ENCODE measurements at regions of chr20 and their contacts with region 1.

Region 1: DNA sequence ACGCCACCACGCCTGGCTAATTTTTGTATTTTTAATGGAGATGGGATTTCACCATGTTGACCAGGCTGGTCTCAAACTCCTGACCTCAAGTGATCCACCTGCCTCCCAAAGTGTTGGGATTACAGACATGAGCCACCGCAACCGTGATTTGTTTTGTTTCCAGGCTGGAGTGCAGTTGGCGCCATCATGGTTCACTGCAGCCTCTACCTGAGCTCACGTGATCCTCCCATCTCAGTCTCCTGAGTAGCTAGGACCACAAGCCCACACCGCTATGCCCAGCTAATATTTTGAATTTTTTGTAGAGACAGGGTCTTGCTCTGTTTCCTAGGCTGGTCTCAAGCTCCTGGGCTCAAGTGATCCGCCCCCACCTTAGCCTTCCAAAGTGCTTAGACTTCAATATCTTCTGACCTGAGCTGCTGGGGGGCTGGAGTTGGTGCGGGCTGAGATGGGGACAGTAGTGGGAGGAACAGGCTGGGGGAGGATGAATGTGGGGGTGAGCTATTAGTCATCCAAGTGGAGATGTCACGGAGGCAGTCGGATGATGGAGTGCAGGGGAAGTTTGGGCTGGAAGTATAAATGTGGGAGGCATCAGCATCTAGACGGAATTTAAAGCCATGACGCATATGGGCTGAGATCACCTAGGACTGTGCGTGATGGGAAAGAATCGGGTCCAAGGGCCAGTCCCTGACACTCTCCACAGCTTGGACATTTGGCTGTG is 23.1 kb upstream of the ZMYND8 start:
- DNase-seq: peak; percentile 63
- H3K4me3 Mint-ChIP-seq: no peak overlapping the region
- H3K27ac Mint-ChIP-seq: no peak overlapping the region
- H3K4me1 Mint-ChIP-seq: peaks cover 14% of the 10 kb centered on the region
- H3K27me3 Mint-ChIP-seq: no peaks in the 10 kb centered on the region
- CTCF ChIP-seq: no peak

Region 2: GRCh38 chr20:46959081-46959692 is 420.4 kb before region 1 on chr20:
- CTCF ChIA-PET with region 1: no interaction called
- POLR2A ChIA-PET with region 1: no interaction called
- intact Hi-C with region 1: no loop called
- DNase-seq: peak; percentile 89
- H3K4me3 Mint-ChIP-seq: no peak overlapping the region
- H3K27ac Mint-ChIP-seq: no peak overlapping the region
- H3K4me1 Mint-ChIP-seq: peaks cover 37% of the 10 kb centered on the region
- H3K27me3 Mint-ChIP-seq: no peaks in the 10 kb centered on the region
- CTCF ChIP-seq: no peak

Region 3: DNA sequence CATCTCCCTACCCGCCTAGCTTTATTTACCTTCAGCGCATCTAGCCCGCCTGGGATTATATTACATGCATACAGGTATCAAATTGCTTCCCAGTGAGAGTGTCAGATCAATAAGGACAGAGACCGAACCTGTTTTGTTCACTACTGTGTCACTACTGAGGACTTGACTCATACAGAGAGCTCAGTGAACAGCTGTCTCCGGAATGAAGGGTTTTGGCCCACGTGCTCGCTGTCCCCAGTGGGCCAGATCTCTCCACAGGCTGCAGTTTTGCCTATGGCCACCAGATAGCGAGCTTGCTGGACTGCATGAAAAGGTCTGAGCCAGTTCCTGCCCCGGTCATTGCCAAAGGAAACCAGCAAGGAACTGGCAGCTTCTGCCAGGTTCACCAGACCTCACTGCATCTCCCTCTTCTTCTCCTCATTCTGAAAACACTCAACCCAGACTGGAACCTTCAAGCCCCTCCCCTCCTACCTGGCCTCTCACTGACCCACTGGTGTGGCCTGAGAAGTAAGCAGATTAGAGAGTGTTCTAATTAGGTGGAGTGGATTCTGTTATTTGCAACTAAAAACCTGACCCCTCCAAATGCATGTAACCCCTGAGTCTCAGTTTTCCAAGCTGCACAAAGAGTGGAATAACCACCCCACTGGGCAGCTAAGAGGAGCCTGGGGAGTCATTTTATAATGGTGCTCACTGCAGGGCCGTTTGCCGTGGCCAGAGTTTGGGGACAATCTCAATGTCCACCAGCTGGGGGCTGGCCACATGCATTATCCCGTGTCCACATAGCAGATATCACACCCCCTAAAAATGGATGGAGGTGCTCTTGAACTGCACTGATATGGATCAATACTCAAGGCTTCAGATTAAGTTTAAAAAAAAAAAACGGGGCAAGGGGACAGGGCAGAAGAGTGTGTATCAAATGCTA is 173.8 kb before region 1 on chr20:
- CTCF ChIA-PET with region 1: interaction called, 108 read pairs
- POLR2A ChIA-PET with region 1: interaction called, 4 read pairs
- intact Hi-C with region 1: no loop called
- DNase-seq: peak; percentile 69
- H3K4me3 Mint-ChIP-seq: no peak overlapping the region
- H3K27ac Mint-ChIP-seq: no peak overlapping the region
- H3K4me1 Mint-ChIP-seq: peaks cover 6% of the 10 kb centered on the region
- H3K27me3 Mint-ChIP-seq: no peaks in the 10 kb centered on the region
- CTCF ChIP-seq: peak; percentile 67

Region 4: DNA sequence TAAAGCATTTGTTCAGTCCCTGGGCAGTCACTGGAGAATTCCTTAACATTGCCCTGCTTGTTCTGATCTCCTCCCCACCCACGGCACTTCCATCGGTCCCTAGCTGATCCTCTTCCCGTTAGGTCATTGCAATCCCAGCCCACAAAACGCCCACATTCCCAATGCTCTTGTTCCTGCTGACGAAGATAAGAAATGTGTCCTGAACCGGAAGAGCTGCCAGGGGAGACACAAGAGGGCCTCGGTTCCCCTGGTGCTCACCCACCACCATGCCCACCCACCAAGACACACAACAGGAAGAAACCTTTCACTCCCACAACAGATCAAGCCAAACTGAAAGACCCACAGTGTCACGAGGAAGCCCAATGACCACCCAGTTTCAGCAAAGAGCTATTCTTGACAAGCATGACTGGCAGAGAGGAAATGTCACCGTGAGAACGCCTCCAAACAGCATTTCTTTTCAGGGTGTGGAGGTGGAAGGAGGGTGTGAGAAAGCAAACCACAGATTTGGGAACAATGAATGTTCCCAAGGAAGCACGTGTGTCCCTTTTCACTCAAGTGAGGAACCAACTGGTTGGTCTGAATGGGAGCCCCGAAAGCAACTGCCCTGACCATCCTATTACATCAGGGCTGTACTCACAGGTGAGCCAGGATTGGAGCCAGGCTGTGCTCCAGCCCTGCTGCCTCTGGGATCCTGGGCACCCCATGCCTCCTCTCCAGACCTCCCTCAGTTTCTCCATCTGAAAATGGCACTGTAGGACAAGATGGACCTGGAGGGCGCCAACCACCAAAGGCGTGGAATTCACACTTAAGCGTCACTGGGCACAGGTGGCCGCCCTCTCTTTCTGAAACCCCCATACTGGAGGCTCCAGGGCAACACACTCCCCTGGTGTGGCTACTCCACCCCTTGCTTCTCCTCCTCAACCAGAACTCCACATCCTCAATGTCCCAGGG is 120.6 kb before region 1 on chr20:
- CTCF ChIA-PET with region 1: interaction called, 12 read pairs
- POLR2A ChIA-PET with region 1: interaction called, 5 read pairs
- intact Hi-C with region 1: no loop called
- DNase-seq: peak; percentile 73
- H3K4me3 Mint-ChIP-seq: peak overlapping the region; percentile 19
- H3K27ac Mint-ChIP-seq: peak overlapping the region; percentile 86
- H3K4me1 Mint-ChIP-seq: peaks cover 37% of the 10 kb centered on the region
- H3K27me3 Mint-ChIP-seq: no peaks in the 10 kb centered on the region
- CTCF ChIP-seq: no peak

Region 5: DNA sequence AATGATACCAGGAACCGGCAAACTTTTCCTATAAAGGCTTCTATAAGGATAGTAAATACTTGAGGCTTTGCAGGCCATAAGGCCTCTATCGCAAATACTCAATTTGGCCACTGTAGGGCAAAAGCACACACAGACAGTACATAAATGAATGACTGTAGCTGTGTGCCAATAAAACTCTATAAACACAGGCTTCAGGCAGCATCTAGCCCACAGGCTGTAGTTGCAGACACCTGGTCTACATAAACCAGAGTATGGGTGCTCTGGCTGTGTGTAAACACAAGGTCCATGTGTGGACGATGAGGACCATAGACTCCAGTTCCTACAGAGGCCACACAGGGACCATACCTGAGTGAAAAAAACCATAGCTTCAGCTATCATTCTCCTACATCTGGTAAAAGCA is 75.3 kb before region 1 on chr20:
- CTCF ChIA-PET with region 1: interaction called, 19 read pairs
- POLR2A ChIA-PET with region 1: interaction called, 3 read pairs
- intact Hi-C with region 1: no loop called
- DNase-seq: no peak
- H3K4me3 Mint-ChIP-seq: no peak overlapping the region
- H3K27ac Mint-ChIP-seq: peak overlapping the region; percentile 49
- H3K4me1 Mint-ChIP-seq: peaks cover 15% of the 10 kb centered on the region
- H3K27me3 Mint-ChIP-seq: no peaks in the 10 kb centered on the region
- CTCF ChIP-seq: no peak

Region 6: DNA sequence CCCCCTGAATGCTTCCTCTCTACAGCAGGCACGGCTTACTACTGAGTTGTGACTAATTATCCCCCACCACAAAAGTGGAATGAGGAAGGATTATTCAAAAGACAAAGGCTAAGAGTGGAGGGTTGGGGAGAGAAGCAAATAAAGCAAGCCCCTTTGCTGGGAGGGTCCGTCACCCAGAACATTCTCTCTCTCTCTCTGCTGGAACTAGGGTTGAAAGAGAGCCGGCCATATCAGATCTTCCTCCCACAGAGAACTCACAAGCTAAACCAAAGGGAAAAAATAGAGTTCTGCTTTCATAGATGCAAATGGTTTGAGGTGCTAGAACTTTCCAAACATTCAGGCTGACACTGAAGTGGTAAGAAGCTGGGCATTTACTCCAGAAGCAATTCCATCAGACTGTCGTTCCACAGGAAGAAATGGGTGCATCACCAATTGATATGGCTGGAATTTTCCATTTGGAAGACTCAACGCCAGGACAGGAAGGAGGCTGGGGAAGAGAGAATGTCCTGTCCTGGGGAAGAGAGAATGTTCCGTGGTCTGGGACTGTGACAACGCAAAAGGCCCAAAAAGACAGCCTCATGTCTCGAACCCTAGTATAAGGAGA is 31.0 kb before region 1 on chr20:
- CTCF ChIA-PET with region 1: interaction called, 37 read pairs
- POLR2A ChIA-PET with region 1: interaction called, 307 read pairs
- intact Hi-C with region 1: no loop called
- DNase-seq: no peak
- H3K4me3 Mint-ChIP-seq: no peak overlapping the region
- H3K27ac Mint-ChIP-seq: no peak overlapping the region
- H3K4me1 Mint-ChIP-seq: peaks cover 23% of the 10 kb centered on the region
- H3K27me3 Mint-ChIP-seq: no peaks in the 10 kb centered on the region
- CTCF ChIP-seq: no peak

Region 7: DNA sequence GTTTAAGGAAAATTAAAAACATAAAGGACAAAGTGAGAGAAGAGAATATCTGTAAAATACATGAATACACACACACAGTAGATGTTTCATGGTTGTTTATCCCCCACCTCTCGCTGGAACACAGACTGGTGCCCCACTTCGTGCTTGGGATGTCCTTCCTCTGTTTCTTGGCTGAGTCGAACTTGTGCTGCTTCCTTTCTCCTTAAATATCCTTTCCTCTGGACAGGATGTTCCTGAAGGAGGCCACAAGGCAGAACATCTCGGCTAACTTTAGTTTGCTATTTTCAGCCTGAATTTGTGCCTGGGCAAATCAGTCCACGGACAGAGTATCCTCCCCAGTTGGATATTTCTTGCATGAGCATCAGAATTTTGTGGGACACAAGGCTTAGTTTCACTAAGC is 31.6 kb after region 1 on chr20:
- CTCF ChIA-PET with region 1: interaction called, 10 read pairs
- POLR2A ChIA-PET with region 1: interaction called, 3 read pairs
- intact Hi-C with region 1: no loop called
- DNase-seq: no peak
- H3K4me3 Mint-ChIP-seq: no peak overlapping the region
- H3K27ac Mint-ChIP-seq: no peak overlapping the region
- H3K4me1 Mint-ChIP-seq: no peaks in the 10 kb centered on the region
- H3K27me3 Mint-ChIP-seq: no peaks in the 10 kb centered on the region
- CTCF ChIP-seq: no peak

Region 8: DNA sequence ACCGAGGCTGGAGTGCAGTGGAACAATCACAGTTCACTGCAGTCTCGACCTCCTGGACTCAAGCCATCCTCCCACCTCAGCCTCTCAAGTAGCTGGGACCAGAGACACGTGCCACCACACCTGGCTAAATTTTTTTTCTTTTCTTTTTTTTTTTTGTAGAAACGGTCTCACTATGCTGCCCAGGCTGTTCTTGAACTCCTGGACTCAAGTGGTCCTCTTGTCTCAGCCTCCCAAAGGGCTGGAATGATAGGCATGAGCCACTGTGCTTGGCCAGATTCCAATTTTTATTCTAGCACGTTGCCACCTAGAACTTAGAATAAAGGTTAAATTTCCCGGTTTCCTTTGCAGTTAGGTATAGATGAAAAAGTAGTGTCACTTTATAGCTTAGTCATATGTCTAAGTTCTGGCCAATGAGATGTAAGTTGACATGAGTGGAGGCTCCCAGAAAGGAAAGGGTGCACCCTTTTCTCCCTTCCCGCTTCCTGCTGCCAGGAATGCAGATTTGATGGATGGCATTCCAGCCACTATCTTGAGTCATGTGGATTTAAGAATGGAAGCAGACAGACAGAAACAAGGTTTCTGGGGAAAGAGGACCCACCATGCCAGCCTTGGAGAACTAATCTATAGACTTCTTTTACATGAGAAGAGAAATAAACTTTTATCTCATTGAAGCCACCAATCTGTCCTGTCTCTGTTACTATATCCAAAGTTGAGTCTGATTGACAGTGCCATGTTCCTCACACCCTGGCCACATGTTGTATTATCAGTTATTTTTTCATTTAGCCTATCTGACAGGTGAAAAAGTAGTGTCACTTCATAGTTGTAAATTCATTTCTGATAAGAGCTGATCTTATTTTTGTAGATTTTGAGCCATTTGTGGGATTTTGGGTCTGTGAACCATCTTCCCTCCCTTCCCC is 61.5 kb after region 1 on chr20:
- CTCF ChIA-PET with region 1: no interaction called
- POLR2A ChIA-PET with region 1: no interaction called
- intact Hi-C with region 1: no loop called
- DNase-seq: no peak
- H3K4me3 Mint-ChIP-seq: no peak overlapping the region
- H3K27ac Mint-ChIP-seq: no peak overlapping the region
- H3K4me1 Mint-ChIP-seq: peaks cover 6% of the 10 kb centered on the region
- H3K27me3 Mint-ChIP-seq: no peaks in the 10 kb centered on the region
- CTCF ChIP-seq: no peak

Region 9: DNA sequence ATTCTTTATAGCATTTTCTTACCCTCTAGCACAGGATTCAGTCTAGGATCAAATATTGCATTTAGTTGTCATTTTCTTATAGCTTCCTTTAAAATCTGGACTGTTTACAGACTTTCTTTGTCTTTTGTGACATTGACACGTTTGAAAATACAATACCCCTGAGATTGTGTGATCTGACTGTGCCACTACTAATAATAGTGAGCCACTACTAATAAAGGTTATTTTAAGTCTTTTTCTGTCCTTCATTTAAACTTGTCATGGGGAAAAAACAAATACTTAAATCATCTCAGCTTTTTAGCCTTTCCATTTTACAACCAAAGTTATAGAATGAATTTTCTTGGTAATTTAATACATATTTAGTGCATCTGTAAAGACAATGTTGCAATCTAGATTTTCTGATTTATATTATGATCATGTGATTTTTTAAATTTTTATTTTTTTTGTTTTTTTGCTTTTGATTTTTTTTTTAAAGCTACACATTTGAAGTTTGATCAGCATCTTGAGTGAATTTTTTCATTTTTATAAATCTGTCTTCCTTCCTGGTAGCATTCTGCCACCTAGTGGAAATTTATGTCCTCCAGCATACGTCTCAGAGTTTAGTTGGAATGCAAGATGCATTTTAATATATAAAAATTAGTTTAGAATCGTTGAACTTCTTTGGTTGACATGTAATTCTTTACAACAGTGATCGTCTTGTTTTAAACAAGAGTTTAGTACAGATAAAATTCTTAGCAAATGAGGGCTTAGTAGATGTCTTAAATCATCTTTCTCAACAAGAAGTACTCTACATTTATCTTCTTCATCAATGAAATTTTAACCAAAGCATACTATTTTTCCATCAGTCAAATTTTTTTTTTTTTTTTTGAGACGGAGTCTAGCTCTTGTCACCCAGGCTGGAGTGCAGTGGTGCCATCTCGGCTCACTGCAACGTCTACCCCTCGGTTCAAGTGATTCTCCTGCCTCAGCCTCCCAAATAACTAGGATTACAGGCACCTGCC is 241.5 kb after region 1 on chr20:
- CTCF ChIA-PET with region 1: interaction called, 27 read pairs
- POLR2A ChIA-PET with region 1: interaction called, 10 read pairs
- intact Hi-C with region 1: loop called (anchors 2 kb)
- DNase-seq: peak; percentile 53
- H3K4me3 Mint-ChIP-seq: no peak overlapping the region
- H3K27ac Mint-ChIP-seq: peak overlapping the region; percentile 19
- H3K4me1 Mint-ChIP-seq: peaks cover 12% of the 10 kb centered on the region
- H3K27me3 Mint-ChIP-seq: no peaks in the 10 kb centered on the region
- CTCF ChIP-seq: peak; percentile 72

Region 10: GRCh38 chr20:47686545-47686944 is 307.0 kb after region 1 on chr20:
- CTCF ChIA-PET with region 1: no interaction called
- POLR2A ChIA-PET with region 1: no interaction called
- intact Hi-C with region 1: no loop called
- DNase-seq: no peak
- H3K4me3 Mint-ChIP-seq: no peak overlapping the region
- H3K27ac Mint-ChIP-seq: no peak overlapping the region
- H3K4me1 Mint-ChIP-seq: no peaks in the 10 kb centered on the region
- H3K27me3 Mint-ChIP-seq: no peaks in the 10 kb centered on the region
- CTCF ChIP-seq: no peak